Mammary epithelial cell (primary cell): ENCODE measurements at regions of chr16 and their contacts with region 1.

Region 1: GRCh38 chr16:9351841-9352434 is 260.5 kb downstream of the HAPSTR1 start:
- DNase-seq: no peak
- H3K4me3 ChIP-seq: no peak overlapping the region
- H3K27ac ChIP-seq: no peak overlapping the region
- H3K4me1 ChIP-seq: no peaks in the 10 kb centered on the region
- H3K27me3 ChIP-seq: no peaks in the 10 kb centered on the region
- CTCF ChIP-seq: no peak

Region 2: GRCh38 chr16:9297437-9298113 is 54.4 kb before region 1 on chr16:
- CTCF ChIA-PET with region 1: no interaction called
- dilution Hi-C with region 1: no loop called
- in situ Hi-C with region 1: no loop called
- intact Hi-C with region 1: loop called (anchors 2 kb)
- DNase-seq: no peak
- H3K4me3 ChIP-seq: no peak overlapping the region
- H3K27ac ChIP-seq: no peak overlapping the region
- H3K4me1 ChIP-seq: no peaks in the 10 kb centered on the region
- H3K27me3 ChIP-seq: no peaks in the 10 kb centered on the region
- CTCF ChIP-seq: peak; percentile 17 to 27